ENCODE measurements at regions of chr11 and their contacts with region 1.

Region 1: GRCh38 chr11:73965076-73965860 is 14.4 kb downstream of the DNAJB13 start:
- H3K4me3 Mint-ChIP-seq: no peak overlapping the region
- H3K27ac Mint-ChIP-seq: no peak overlapping the region
- H3K4me1 Mint-ChIP-seq: peaks cover 22% of the 10 kb centered on the region
- H3K27me3 Mint-ChIP-seq: peaks cover 18% of the 10 kb centered on the region

Region 2: GRCh38 chr11:73453562-73453961 is 511.7 kb before region 1 on chr11:
- intact Hi-C with region 1: no loop called
- H3K4me3 Mint-ChIP-seq: no peak overlapping the region
- H3K27ac Mint-ChIP-seq: no peak overlapping the region
- H3K4me1 Mint-ChIP-seq: peaks cover 10% of the 10 kb centered on the region
- H3K27me3 Mint-ChIP-seq: no peaks in the 10 kb centered on the region

Region 3: GRCh38 chr11:74090701-74091100 is 125.4 kb after region 1 on chr11:
- intact Hi-C with region 1: loop called (anchors 5 kb)
- H3K4me3 Mint-ChIP-seq: no peak overlapping the region
- H3K27ac Mint-ChIP-seq: no peak overlapping the region
- H3K4me1 Mint-ChIP-seq: peaks cover 5% of the 10 kb centered on the region
- H3K27me3 Mint-ChIP-seq: no peaks in the 10 kb centered on the region

Region 4: DNA sequence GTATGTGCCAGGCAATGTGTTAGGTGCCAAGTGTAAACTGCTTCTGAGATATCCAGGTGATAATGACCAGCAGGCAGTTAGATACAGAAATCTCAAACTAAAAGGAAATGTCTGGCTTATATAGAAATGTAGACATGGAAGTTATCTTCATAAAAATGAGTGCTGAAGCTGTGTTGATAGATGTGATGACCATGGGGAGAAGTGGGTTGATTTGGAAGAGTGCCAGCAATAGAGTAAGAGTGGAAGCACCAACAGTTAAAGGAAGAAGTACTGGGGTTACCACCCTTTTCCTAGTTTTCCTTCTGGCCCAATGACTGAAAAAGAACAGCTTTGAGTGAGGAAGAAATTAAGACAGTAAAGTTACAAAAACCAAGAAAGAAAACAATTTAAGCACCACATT is 137.1 kb after region 1 on chr11:
- intact Hi-C with region 1: no loop called
- H3K4me3 Mint-ChIP-seq: no peak overlapping the region
- H3K27ac Mint-ChIP-seq: no peak overlapping the region
- H3K4me1 Mint-ChIP-seq: peaks cover 16% of the 10 kb centered on the region
- H3K27me3 Mint-ChIP-seq: no peaks in the 10 kb centered on the region